MCF 10A (cell line): ENCODE measurements at regions of chr1 and their contacts with region 1.

Region 1: GRCh38 chr1:207321079-207321789 is at the start of gene CD55:
- DNase-seq: peak; percentile 100
- H3K4me3 Mint-ChIP-seq: peak within 1 kb of the TSS; percentile 71
- H3K27ac Mint-ChIP-seq: peak within 1 kb of the TSS; percentile 93
- H3K4me1 Mint-ChIP-seq: peaks cover 41% of the 10 kb centered on the region
- H3K27me3 Mint-ChIP-seq: no peaks in the 10 kb centered on the region
- CTCF ChIP-seq: peak; percentile 22
- total RNA-seq, gene CD55: 159 and 213 TPM in 2 replicates

Region 2: DNA sequence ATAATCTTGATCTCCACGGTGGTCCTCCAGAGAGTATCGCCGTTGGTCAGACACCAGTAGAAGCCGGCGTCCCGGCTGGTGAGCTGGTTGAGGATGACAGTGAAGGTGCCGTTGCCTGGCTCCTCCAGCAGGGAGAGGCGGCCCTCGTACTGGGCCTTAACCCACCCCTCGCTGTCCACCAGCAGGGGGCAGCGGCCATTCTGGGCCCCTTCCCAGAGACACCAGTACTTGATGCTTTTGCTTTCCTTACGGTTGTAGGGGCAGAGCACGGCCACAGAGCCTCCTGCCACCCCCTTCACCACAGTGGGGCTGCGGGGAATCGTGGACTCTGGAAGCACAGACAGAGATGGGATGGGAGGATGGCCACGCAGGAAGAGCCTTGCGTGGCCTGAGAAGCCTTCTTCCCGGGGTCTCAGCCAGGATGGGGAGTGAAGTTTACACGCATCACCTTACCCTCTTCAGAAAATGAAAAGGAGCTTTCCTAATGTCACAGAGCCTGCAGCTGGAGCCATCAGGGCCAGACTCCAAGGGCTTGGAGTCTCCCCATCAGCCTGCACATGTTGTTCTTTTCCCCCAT is 385.7 kb before region 1 on chr1:
- CTCF ChIA-PET with region 1: no interaction called
- POLR2A ChIA-PET with region 1: no interaction called
- intact Hi-C with region 1: no loop called
- DNase-seq: peak; percentile 62
- H3K4me3 Mint-ChIP-seq: no peak overlapping the region
- H3K27ac Mint-ChIP-seq: no peak overlapping the region
- H3K4me1 Mint-ChIP-seq: peaks cover 8% of the 10 kb centered on the region
- H3K27me3 Mint-ChIP-seq: no peaks in the 10 kb centered on the region
- CTCF ChIP-seq: peak; percentile 59

Region 3: DNA sequence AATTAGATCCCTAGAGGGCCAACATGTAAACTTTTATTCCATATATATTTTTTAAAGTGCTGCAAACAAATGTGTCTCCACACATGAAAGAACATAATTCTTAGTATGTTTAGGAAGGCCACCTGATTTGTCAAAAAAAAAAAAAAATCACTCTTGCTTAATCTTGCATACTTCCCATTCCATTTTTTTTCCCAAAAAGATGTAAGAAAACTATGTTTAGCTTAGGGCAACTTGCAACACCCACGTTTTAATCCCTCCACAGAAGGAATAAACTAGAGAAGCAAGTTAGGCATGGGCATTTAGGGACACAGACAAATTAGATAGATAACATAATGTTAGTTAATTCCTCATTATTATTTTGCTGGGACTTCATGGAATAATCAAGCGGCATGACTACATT is 275.8 kb before region 1 on chr1:
- CTCF ChIA-PET with region 1: interaction called, 8 read pairs
- POLR2A ChIA-PET with region 1: interaction called, 11 read pairs
- intact Hi-C with region 1: no loop called
- DNase-seq: no peak
- H3K4me3 Mint-ChIP-seq: peak overlapping the region; percentile 37
- H3K27ac Mint-ChIP-seq: peak overlapping the region; percentile 95
- H3K4me1 Mint-ChIP-seq: peaks cover 44% of the 10 kb centered on the region
- H3K27me3 Mint-ChIP-seq: no peaks in the 10 kb centered on the region
- CTCF ChIP-seq: no peak

Region 4: DNA sequence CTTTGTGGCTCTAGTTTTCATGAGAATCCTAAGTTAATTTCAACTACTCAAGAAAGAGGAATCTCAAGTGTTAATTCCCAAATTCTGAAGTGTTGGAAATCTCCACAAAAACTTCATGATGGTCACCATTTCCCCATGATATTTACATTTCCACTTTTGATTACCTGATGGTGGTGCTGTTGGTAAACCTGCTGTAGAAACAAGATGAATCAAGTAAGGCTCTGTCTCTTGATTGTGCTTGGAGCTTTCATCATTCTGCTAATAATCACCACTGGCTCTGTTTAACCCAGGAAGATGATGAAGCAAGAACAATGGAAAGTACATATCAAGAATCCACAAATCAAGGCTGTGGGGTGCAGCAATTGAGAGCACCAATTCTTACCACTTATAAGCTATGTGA is 139.4 kb before region 1 on chr1:
- CTCF ChIA-PET with region 1: interaction called, 7 read pairs
- POLR2A ChIA-PET with region 1: interaction called, 20 read pairs
- intact Hi-C with region 1: loop called (anchors 1 kb)
- DNase-seq: peak; percentile 66
- H3K4me3 Mint-ChIP-seq: no peak overlapping the region
- H3K27ac Mint-ChIP-seq: no peak overlapping the region
- H3K4me1 Mint-ChIP-seq: no peaks in the 10 kb centered on the region
- H3K27me3 Mint-ChIP-seq: no peaks in the 10 kb centered on the region
- CTCF ChIP-seq: peak; percentile 84

Region 5: GRCh38 chr1:207227131-207227630 is 94.1 kb before region 1 on chr1:
- CTCF ChIA-PET with region 1: interaction called, 4 read pairs
- POLR2A ChIA-PET with region 1: interaction called, 72 read pairs
- intact Hi-C with region 1: no loop called
- DNase-seq: no peak
- H3K4me3 Mint-ChIP-seq: no peak overlapping the region
- H3K27ac Mint-ChIP-seq: no peak overlapping the region
- H3K4me1 Mint-ChIP-seq: peaks cover 17% of the 10 kb centered on the region
- H3K27me3 Mint-ChIP-seq: no peaks in the 10 kb centered on the region
- CTCF ChIP-seq: no peak

Region 6: GRCh38 chr1:207309775-207310273 is 11.4 kb before region 1 on chr1:
- CTCF ChIA-PET with region 1: interaction called, 13 read pairs
- POLR2A ChIA-PET with region 1: interaction called, 155 read pairs
- intact Hi-C with region 1: loop called (anchors 1 kb)
- DNase-seq: peak; percentile 91
- H3K4me3 Mint-ChIP-seq: peak overlapping the region; percentile 61
- H3K27ac Mint-ChIP-seq: peak overlapping the region; percentile 93
- H3K4me1 Mint-ChIP-seq: peaks cover 24% of the 10 kb centered on the region
- H3K27me3 Mint-ChIP-seq: no peaks in the 10 kb centered on the region
- CTCF ChIP-seq: no peak

Region 7: DNA sequence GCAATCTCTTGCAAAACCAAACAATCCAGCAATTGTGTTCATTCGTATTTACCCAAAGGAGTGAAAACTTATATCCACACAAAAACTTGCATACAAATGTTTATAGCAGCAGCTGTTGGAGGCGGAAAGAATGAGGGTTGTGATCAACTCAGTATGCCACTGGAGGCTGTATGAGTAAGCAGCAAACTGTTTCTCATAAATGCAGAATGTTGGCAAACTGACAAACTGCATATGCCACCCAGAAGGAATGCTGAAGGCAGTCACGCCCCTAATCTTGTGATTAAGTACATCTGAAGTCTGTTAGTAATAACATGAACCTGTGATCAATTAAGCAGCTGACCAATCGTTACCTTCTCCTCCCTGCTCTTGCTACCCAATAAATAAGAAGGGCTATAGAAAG is 72.4 kb after region 1 on chr1:
- CTCF ChIA-PET with region 1: interaction called, 5 read pairs
- POLR2A ChIA-PET with region 1: interaction called, 32 read pairs
- intact Hi-C with region 1: loop called (anchors 1 kb)
- DNase-seq: peak; percentile 93
- H3K4me3 Mint-ChIP-seq: peak overlapping the region; percentile 37
- H3K27ac Mint-ChIP-seq: peak overlapping the region; percentile 30
- H3K4me1 Mint-ChIP-seq: peaks cover 23% of the 10 kb centered on the region
- H3K27me3 Mint-ChIP-seq: no peaks in the 10 kb centered on the region
- CTCF ChIP-seq: no peak